ENCODE measurements at regions of chr17 and their contacts with region 1.

Region 1: DNA sequence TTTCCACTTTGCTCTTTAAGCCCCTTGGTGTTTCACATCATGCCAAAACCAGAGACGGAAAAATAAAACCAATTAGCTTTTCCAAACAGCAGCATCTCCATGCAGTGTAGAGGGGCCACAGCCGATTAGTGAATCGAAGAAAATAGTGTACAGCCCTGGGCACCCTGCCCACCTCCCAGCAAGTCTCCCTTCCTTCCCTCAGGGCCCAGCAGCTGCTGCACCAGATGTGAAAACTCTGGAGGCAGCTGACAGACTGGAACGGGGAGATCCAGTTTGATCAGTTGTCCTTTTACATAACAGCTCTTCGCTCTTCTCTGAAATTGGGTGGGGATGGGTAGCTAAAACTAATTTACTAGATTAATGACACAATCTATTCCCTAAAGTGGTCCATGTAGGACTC is 19.3 kb downstream of the TMEM11 start:
- DNase-seq: peak; percentile 52 to 67
- ATAC-seq: peak in 7 of 8 donors; percentile 38 to 76 (median 73)
- H3K4me3 ChIP-seq: no peak overlapping the region
- H3K27ac ChIP-seq: peak overlapping the region in 7 of 10 donors; percentile 29 to 60 (median 49)
- H3K4me1 ChIP-seq: peaks cover 6 to 46% (median 31%) of the 10 kb centered on the region in 9 donors
- H3K27me3 ChIP-seq: no peaks in the 10 kb centered on the region
- CTCF ChIP-seq: no peak

Region 2: GRCh38 chr17:21140911-21141310 is 53.8 kb before region 1 on chr17:
- intact Hi-C with region 1: loop called in 2 of 10 experiments (anchors 10 kb)
- DNase-seq: no peak
- ATAC-seq: no peak
- H3K4me3 ChIP-seq: no peak overlapping the region
- H3K27ac ChIP-seq: no peak overlapping the region
- H3K4me1 ChIP-seq: peaks cover 0 to 24% (median 0%) of the 10 kb centered on the region in 9 donors
- H3K27me3 ChIP-seq: no peaks in the 10 kb centered on the region
- CTCF ChIP-seq: no peak

Region 3: DNA sequence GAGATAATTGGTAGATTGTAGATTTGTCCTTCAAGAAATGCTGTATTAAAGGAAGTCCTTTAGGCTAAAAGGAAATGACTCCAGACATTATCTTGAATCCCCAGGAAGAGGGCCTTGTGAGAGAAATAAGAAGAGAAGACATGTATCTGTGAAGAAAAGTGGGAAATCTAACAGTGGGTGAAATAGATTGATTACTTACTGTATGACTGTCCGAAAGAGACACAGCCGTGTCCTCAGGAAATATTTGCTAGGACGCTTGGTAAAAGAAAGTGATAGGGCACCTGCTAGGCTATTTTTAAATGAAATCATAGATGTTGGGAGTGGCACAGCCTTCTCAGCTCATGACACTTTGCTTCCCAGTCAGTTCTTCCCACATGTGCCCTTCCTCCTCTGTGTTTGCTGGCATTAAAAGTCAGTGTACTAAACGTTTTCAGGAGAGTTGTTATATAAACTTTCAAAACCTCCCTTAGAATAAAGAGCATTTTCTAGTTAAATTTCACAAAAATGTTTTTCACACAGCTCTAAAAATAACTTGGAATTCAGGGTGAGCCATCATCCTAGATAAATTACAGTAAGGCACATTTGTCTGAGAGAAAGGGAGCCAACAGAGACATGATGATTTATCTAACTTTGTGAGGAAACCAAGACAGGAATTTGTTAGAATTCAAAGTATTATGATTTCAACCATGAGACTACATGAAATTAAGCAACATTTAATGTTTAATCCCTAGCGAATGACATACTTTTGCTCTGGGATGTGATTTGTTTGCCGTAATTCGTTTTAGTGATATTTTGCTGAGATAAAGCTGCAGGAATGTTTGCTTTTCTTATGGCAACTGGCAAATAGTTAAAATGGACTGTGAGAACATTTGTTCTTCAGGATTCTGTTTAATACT is 33.0 kb before region 1 on chr17:
- intact Hi-C with region 1: no loop called
- DNase-seq: no peak
- ATAC-seq: peak in 5 of 8 donors; percentile 25 to 63 (median 55)
- H3K4me3 ChIP-seq: no peak overlapping the region
- H3K27ac ChIP-seq: peak overlapping the region in 9 of 10 donors; percentile 31 to 74 (median 64)
- H3K4me1 ChIP-seq: peaks cover 5 to 48% (median 30%) of the 10 kb centered on the region in 9 donors
- H3K27me3 ChIP-seq: no peaks in the 10 kb centered on the region
- CTCF ChIP-seq: no peak

Measured in heart right ventricle (tissue), 16 donors.